ENCODE measurements at regions of chr5 and their contacts with region 1.

Region 1: GRCh38 chr5:112576298-112576925 is 157.3 kb upstream of the EPB41L4A start:
- DNase-seq: no peak
- H3K4me3 ChIP-seq: no peak overlapping the region
- H3K27ac ChIP-seq: peak overlapping the region; percentile 3 to 58 (median 36)
- H3K4me1 ChIP-seq: peaks cover 0 to 4% (median 2%) of the 10 kb centered on the region in 4 donors
- H3K27me3 ChIP-seq: no peaks in the 10 kb centered on the region
- CTCF ChIP-seq: no peak
- EP300 ChIP-seq: no peak
- POLR2A ChIP-seq: no peak

Region 2: GRCh38 chr5:112419986-112420864 is 156.2 kb before region 1 on chr5:
- in situ Hi-C with region 1: no loop called
- intact Hi-C with region 1: no loop called
- DNase-seq: peak; percentile 87
- H3K4me3 ChIP-seq: peak overlapping the region; percentile 77 to 88 (median 84)
- H3K27ac ChIP-seq: peak overlapping the region; percentile 83 to 86 (median 85)
- H3K4me1 ChIP-seq: peaks cover 0 to 9% (median 1%) of the 10 kb centered on the region in 4 donors
- H3K27me3 ChIP-seq: peaks cover 9% of the 10 kb centered on the region
- CTCF ChIP-seq: peak; percentile 72 to 93 (median 79)
- EP300 ChIP-seq: no peak
- POLR2A ChIP-seq: no peak

Region 3: GRCh38 chr5:112594095-112594850 is 17.9 kb after region 1 on chr5:
- in situ Hi-C with region 1: no loop called
- intact Hi-C with region 1: loop called (anchors 1 kb)
- DNase-seq: no peak
- H3K4me3 ChIP-seq: no peak overlapping the region
- H3K27ac ChIP-seq: no peak overlapping the region
- H3K4me1 ChIP-seq: peaks cover 0 to 9% (median 0%) of the 10 kb centered on the region in 4 donors
- H3K27me3 ChIP-seq: no peaks in the 10 kb centered on the region
- CTCF ChIP-seq: no peak
- EP300 ChIP-seq: no peak
- POLR2A ChIP-seq: no peak

Region 4: GRCh38 chr5:113123618-113124017 is 547.2 kb after region 1 on chr5:
- in situ Hi-C with region 1: no loop called
- intact Hi-C with region 1: no loop called
- DNase-seq: no peak
- H3K4me3 ChIP-seq: no peak overlapping the region
- H3K27ac ChIP-seq: no peak overlapping the region
- H3K4me1 ChIP-seq: peaks cover 0 to 11% (median 0%) of the 10 kb centered on the region in 4 donors
- H3K27me3 ChIP-seq: no peaks in the 10 kb centered on the region
- CTCF ChIP-seq: no peak
- EP300 ChIP-seq: no peak
- POLR2A ChIP-seq: no peak